Prostate gland (tissue), 2 donors: ENCODE measurements at regions of chr22 and their contacts with region 1.

Region 1: GRCh38 chr22:24156913-24157821 is 24.1 kb upstream of the SUSD2 start:
- DNase-seq: peak; percentile 70
- H3K4me3 ChIP-seq: peak overlapping the region; percentile 62 to 67
- H3K27ac ChIP-seq: peak overlapping the region in 1 of 2 donors; percentile 70
- H3K4me1 ChIP-seq: peaks cover 9% of the 10 kb centered on the region
- H3K27me3 ChIP-seq: no peaks in the 10 kb centered on the region
- CTCF ChIP-seq: peak; percentile 41 to 84 (median 63)
- POLR2A ChIP-seq: no peak

Region 2: DNA sequence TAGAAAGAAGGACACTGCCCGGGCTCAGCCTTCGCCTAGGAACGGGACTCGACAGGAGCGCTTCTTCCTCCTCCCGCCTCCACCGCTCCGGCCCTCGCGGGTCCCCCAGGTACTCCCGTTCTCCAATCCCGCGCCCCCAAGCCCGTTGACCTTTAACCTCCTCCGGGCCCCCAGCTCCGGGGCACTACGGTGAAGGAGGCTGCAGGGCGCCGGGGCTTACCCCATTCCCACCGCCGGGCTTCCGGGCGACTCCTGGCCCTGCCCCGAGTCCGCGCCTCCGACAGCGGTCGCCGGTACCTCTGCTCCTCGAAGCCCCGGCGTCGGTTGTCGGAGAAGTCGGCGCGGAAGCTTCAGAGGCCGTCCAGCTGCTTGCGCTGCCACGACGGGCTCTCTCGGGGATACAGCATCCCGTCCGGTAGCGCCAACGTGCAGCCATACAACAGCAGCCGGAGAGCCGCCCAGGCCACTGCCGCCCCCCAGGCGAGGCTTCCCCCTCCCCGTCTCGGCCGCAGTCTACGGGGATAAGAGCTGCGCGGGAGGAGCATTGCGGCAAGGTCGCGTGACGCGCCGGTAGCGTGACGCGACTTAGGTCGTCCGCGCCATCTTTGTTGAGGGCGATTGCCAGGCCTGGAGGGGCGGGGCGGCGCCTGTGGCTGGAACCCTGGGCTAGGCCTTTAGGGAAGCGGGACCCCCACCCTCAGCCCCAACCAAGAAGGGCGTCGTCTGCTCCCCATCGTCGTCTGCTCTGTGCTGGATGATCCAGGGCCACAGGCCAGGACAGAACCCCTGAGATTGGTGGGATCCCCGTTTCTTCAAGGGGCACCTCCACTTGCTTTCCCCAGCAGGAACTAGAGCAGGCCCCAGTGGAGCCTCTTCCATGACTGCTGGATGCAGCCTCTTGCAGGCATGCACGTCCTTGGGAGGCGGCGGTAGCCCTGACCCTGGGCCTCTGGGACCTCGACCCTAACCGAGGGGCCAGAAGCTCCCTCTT is 440.1 kb before region 1 on chr22:
- intact Hi-C with region 1: loop called (anchors 10 kb)
- DNase-seq: peak; percentile 81
- H3K4me3 ChIP-seq: peak overlapping the region; percentile 82 to 91
- H3K27ac ChIP-seq: peak overlapping the region; percentile 49 to 72
- H3K4me1 ChIP-seq: no peaks in the 10 kb centered on the region
- H3K27me3 ChIP-seq: no peaks in the 10 kb centered on the region
- CTCF ChIP-seq: no peak
- POLR2A ChIP-seq: peak; percentile 90

Region 3: DNA sequence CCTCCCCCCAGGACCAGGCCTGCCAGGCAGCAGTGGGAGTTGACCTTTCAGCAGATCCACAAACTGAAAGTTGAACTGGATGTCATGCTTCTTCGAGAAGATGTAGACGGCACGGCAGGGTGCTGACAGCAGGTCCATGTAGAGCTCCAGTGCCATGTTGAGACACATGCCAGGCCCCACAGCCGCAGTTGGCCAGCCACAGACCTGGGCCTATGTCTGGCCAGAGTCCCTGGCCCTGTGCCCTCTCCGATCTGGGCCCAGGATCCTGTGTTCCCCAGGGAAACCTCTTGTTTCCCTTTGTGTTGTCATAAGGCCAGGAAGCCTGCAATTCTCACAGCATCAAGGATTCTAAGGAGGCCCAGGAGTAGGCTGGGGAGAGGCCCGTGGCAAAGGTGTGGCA is 152.0 kb before region 1 on chr22 and contains the start of gene GSTT4:
- intact Hi-C with region 1: loop called (anchors 5 kb)
- DNase-seq: no peak
- H3K4me3 ChIP-seq: no peak within 1 kb of the TSS
- H3K27ac ChIP-seq: no peak within 1 kb of the TSS
- H3K4me1 ChIP-seq: no peaks in the 10 kb centered on the region
- H3K27me3 ChIP-seq: no peaks in the 10 kb centered on the region
- CTCF ChIP-seq: no peak
- POLR2A ChIP-seq: no peak
- total RNA-seq, gene GSTT4: 0.80 TPM in 1 of 2 donors, not detected in the other

Region 4: DNA sequence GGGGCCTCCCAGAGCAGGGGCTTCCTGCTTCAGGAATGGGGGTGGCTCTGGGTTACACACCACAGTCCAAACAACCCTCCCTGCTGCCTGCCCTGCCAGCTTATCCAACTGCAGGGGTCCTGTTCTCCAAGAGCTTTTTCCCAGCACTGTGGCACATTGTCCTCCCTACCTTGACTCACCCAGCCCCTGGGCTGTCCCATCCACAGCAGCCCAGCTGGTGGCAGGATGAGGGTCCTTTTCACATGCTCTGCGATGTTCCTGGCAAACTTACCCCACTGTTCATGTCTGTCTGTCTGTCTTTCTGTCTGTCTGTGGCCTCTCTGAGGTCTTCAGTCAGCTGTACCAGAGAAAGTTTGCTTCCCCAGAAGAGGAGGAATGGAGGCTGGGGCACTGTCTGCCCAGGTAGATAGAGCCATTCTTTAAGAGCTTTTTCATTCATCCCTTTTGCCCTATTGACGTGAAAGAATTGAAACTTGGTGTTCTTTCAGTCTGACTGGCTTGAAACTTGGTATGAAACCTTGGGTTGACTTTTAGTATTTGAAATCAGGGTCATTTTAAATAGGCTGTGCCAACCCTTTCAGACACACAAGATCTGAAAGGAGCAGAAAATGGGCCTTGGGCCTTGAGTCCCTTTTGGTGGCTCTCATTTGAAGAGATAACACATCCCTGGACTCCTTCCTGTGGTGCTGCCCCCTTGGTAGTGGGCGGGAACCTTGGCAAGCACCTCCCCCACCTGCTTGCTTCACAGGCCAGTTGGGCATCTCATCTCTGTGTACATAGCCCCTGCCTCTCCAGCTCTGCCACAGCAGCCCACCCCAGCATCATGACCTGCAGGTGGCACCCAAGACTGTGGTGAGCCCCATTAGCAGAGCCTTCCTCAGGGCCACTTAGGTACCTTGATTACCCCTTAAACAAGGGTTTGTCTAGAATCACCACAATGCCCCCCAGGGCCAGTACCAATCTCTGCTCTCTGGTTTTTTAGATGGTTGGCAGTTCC is 50.5 kb before region 1 on chr22:
- intact Hi-C with region 1: loop called (anchors 5 kb)
- DNase-seq: no peak
- H3K4me3 ChIP-seq: no peak overlapping the region
- H3K27ac ChIP-seq: peak overlapping the region in 1 of 2 donors; percentile 48
- H3K4me1 ChIP-seq: no peaks in the 10 kb centered on the region
- H3K27me3 ChIP-seq: no peaks in the 10 kb centered on the region
- CTCF ChIP-seq: peak in 3 of 4 experiments; percentile 21 to 44 (median 26)
- POLR2A ChIP-seq: no peak

Region 5: GRCh38 chr22:24117942-24118341 is 39.2 kb before region 1 on chr22:
- intact Hi-C with region 1: no loop called
- DNase-seq: no peak
- H3K4me3 ChIP-seq: no peak overlapping the region
- H3K27ac ChIP-seq: no peak overlapping the region
- H3K4me1 ChIP-seq: no peaks in the 10 kb centered on the region
- H3K27me3 ChIP-seq: no peaks in the 10 kb centered on the region
- CTCF ChIP-seq: no peak
- POLR2A ChIP-seq: no peak